ENCODE measurements at regions of chr1 and their contacts with region 1.

Region 1: GRCh38 chr1:23634842-23635651 is 56.6 kb upstream of the RPL11 start:
- DNase-seq: peak; percentile 67
- ATAC-seq: peak; percentile 85
- H3K4me3 ChIP-seq: peak overlapping the region; percentile 42 to 71
- H3K27ac ChIP-seq: peak overlapping the region; percentile 84
- H3K4me1 ChIP-seq: peaks cover 3% of the 10 kb centered on the region; the same call in 1 of the 2 replicates
- H3K27me3 ChIP-seq: no peaks in the 10 kb centered on the region
- CTCF ChIP-seq: peak; percentile 95

Region 2: GRCh38 chr1:23484253-23485001 is 150.6 kb before region 1 on chr1:
- CTCF ChIA-PET with region 1: interaction called, 23 read pairs
- POLR2A ChIA-PET with region 1: no interaction called
- in situ Hi-C with region 1: no loop called
- intact Hi-C with region 1: no loop called
- DNase-seq: peak; percentile 74
- ATAC-seq: peak; percentile 95
- H3K4me3 ChIP-seq: peak overlapping the region; percentile 63 to 70
- H3K27ac ChIP-seq: peak overlapping the region; percentile 82
- H3K4me1 ChIP-seq: peaks cover 12% of the 10 kb centered on the region
- H3K27me3 ChIP-seq: no peaks in the 10 kb centered on the region
- CTCF ChIP-seq: no peak; the same call in 1 of the 2 replicates

Region 3: GRCh38 chr1:23507507-23507906 is 127.5 kb before region 1 on chr1:
- CTCF ChIA-PET with region 1: no interaction called
- POLR2A ChIA-PET with region 1: interaction called, 17 read pairs
- in situ Hi-C with region 1: no loop called
- intact Hi-C with region 1: no loop called
- DNase-seq: no peak
- ATAC-seq: no peak
- H3K4me3 ChIP-seq: no peak overlapping the region
- H3K27ac ChIP-seq: no peak overlapping the region
- H3K4me1 ChIP-seq: no peaks in the 10 kb centered on the region
- H3K27me3 ChIP-seq: no peaks in the 10 kb centered on the region
- CTCF ChIP-seq: no peak

Region 4: GRCh38 chr1:23539698-23540266 is 95.3 kb before region 1 on chr1:
- CTCF ChIA-PET with region 1: interaction called, 68 read pairs
- POLR2A ChIA-PET with region 1: no interaction called
- in situ Hi-C with region 1: no loop called
- intact Hi-C with region 1: loop called (anchors 1 kb)
- DNase-seq: peak; percentile 91
- ATAC-seq: peak; percentile 95
- H3K4me3 ChIP-seq: peak overlapping the region; percentile 30 to 52
- H3K27ac ChIP-seq: peak overlapping the region; percentile 20; the same call in 1 of the 2 replicates
- H3K4me1 ChIP-seq: peaks cover 8% of the 10 kb centered on the region; the same call in 1 of the 2 replicates
- H3K27me3 ChIP-seq: no peaks in the 10 kb centered on the region
- CTCF ChIP-seq: peak; percentile 97

Region 5: DNA sequence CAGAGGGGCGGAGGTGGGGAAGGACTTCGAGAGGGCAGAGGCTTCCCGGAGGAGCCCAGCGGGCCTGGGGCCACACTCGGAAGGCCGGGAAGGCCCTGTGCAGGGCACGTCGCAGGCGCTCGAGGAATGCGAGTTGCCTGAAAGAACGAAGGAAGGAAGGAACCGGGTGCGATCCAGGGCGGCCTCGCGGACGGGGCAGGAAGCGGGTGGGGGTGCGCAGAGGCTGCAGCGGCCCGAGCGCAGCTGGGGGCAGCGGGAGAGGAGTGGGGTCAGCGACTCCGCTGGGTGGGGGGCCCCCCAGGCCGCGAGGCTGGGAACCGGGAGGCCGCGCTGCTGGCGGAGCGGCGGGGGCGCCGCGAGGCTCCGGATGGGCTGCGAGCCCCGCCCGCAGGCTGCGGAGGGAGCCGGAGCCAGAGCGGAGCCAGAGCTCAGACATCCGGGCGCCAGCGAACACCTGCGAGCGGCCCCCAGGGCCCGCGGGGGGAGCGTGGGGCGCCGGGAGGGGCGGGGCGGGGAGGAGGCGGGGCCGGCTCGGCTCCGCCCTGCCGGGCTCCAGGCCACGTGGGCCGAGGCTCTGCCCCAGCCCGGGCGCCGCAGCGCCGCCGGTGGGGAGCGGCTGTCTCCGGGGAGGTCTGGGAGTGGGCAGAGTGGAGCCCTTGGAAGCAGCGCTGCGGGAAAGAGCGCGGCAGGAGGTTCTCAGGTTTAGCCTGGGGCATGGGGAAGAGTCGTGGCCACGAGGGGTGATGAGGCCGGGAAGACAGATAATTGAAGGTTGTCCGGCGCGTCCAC is 80.4 kb before region 1 on chr1:
- CTCF ChIA-PET with region 1: interaction called, 12 read pairs
- POLR2A ChIA-PET with region 1: interaction called, 9 read pairs
- in situ Hi-C with region 1: no loop called
- intact Hi-C with region 1: no loop called
- DNase-seq: no peak
- ATAC-seq: peak; percentile 77
- H3K4me3 ChIP-seq: peak overlapping the region; percentile 43 to 52
- H3K27ac ChIP-seq: peak overlapping the region; percentile 88
- H3K4me1 ChIP-seq: peaks cover 38% of the 10 kb centered on the region
- H3K27me3 ChIP-seq: no peaks in the 10 kb centered on the region
- CTCF ChIP-seq: peak; percentile 70

Region 6: DNA sequence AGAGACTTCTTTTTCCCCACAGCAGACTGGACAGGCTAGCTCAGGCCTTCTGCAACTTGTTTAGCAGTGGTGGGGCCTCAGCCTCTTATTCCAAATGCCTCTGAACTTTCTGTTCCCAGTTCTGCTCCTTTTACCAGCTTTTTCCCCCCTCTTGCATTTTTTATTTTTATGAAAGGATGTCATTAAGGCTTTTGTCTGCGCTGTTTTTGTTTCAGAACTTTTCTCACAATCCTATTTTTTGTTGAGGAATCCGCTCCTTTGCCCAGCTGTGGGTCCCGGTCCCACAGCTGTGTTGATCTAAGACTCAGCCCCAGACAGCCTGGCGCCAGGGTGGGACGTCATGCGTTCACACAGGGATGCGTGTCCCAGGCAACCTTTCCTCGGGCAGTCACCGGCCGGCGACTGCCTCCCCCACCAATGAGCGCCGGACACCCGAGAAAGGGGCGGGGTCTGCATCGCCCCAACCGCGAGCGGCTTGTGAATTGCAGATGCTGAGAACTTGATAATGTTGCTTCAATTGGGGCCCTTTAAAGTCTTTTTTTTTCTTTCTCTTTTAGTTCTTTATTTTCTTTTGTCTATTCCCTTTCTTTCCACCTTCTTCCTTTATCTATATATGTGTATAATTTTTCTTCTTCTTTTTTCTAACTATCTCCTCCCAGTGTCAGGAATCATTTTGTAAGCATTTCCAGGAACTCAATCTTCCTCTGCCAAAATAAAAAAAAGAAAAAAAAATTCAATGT is 72.7 kb before region 1 on chr1:
- CTCF ChIA-PET with region 1: interaction called, 10 read pairs
- POLR2A ChIA-PET with region 1: interaction called, 3 read pairs
- in situ Hi-C with region 1: no loop called
- intact Hi-C with region 1: no loop called
- DNase-seq: no peak
- ATAC-seq: peak; percentile 84
- H3K4me3 ChIP-seq: peak overlapping the region; percentile 25 to 34
- H3K27ac ChIP-seq: peak overlapping the region; percentile 88
- H3K4me1 ChIP-seq: peaks cover 58% of the 10 kb centered on the region
- H3K27me3 ChIP-seq: no peaks in the 10 kb centered on the region
- CTCF ChIP-seq: no peak

Region 7: GRCh38 chr1:23682946-23683345 is 47.9 kb after region 1 on chr1:
- CTCF ChIA-PET with region 1: interaction called, 13 read pairs
- POLR2A ChIA-PET with region 1: no interaction called
- in situ Hi-C with region 1: no loop called
- intact Hi-C with region 1: no loop called
- DNase-seq: no peak
- ATAC-seq: no peak
- H3K4me3 ChIP-seq: no peak overlapping the region
- H3K27ac ChIP-seq: no peak overlapping the region
- H3K4me1 ChIP-seq: no peaks in the 10 kb centered on the region
- H3K27me3 ChIP-seq: no peaks in the 10 kb centered on the region; the same call in 1 of the 2 replicates
- CTCF ChIP-seq: no peak

Region 8: DNA sequence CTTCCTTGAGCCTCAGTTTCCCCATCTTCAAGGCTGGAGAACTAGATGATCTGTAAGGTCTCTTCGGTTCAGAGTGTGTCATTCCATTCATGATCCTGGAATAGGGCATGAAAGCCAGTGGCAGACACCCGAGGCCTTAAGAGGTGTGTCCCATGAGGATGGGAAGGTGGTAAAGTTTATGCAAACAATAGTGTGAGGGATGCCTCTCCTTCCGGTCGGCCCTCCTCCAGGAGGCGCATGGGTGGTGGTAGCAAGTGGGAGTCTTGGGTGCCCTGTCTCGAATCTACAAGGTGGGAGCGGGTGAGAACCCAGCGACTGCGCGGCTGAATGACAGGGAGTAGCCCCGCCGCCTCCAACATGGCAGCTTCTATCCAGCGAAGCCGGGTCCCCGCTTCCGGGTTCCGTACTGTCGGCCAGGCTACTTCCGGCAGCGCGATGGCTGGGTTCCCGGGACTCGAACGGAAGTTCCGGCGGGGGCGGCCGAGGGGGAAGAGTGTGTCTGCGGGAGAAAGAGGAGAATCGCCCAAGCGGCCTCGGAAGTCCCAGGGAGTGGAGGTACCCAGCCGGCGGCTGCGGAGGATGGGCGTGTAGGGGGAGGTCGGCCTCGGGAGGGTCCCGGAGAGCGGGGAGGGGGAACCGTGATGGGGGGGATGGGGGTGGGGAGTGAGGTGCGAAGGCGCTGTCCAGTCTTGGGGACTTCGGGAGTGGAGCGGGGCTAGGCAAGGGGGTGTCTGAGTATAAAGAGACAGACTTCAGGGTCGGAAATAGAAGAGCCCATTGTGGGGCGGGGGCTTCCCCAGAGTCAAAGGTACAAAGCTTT is 155.9 kb after region 1 on chr1 and contains the start of gene LYPLA2:
- CTCF ChIA-PET with region 1: no interaction called
- POLR2A ChIA-PET with region 1: no interaction called
- in situ Hi-C with region 1: no loop called
- intact Hi-C with region 1: no loop called
- DNase-seq: peak; percentile 83
- ATAC-seq: peak; percentile 75
- H3K4me3 ChIP-seq: peak within 1 kb of the TSS; percentile 97 to 99
- H3K27ac ChIP-seq: peak within 1 kb of the TSS; percentile 92
- H3K4me1 ChIP-seq: peaks cover 41% of the 10 kb centered on the region
- H3K27me3 ChIP-seq: no peaks in the 10 kb centered on the region
- CTCF ChIP-seq: no peak
- total RNA-seq, gene LYPLA2: 82.9 TPM

Region 9: DNA sequence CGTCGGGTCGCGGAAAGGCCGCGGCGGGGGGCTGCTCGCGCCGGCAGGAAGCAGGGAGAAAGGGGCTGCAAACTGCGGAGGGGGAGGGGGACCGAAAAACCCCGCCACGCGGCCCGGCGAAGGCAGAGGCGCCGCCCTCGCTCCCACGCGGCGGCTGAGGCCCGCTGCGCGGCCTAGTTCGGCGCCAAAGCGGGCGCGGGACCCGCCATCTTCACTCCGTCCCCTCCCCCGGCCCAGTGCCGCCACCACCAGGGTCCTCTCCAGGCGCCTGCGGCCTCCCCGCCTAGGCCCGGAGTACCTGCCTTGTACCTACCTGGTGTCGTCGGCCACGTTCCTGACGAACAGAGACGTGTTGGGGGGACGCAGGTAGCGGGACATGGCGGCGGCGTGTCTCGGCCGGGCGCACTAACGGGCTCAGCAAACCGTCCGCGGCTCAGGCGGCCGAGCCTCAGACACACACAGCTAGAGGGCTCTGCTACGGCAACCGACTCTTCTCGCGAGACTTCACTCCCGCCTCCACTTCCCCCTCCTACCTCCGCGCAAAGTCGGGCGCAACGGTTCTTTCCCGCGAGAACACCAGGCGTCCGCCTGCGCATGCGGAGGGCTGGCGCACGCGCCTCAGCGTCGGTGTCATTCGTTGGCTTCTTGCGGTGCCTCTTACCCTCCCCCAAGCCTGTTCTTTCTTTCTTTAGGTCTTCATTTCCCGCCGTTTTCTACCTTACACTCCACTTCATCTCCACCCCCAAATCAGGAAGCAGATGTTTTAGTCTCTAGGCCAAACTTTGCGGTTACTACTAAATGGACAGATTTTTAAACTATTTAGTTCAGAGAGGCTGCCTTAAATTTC is 345.1 kb after region 1 on chr1 and contains the start of gene SRSF10:
- CTCF ChIA-PET with region 1: no interaction called
- POLR2A ChIA-PET with region 1: no interaction called
- in situ Hi-C with region 1: no loop called
- intact Hi-C with region 1: no loop called
- DNase-seq: peak; percentile 97
- ATAC-seq: peak; percentile 98
- H3K4me3 ChIP-seq: peak within 1 kb of the TSS; percentile 70 to 91
- H3K27ac ChIP-seq: peak within 1 kb of the TSS; percentile 100
- H3K4me1 ChIP-seq: peaks cover 52% of the 10 kb centered on the region
- H3K27me3 ChIP-seq: no peaks in the 10 kb centered on the region
- CTCF ChIP-seq: no peak; the same call in 1 of the 2 replicates
- total RNA-seq, gene SRSF10: 137 TPM

Measured in Panc1 (cell line).